Activated CD4-positive, alpha-beta memory T cell treated with anti-CD3 and anti-CD28 coated beads for 36 hours (primary cell): ENCODE measurements at regions of chr6 and their contacts with region 1.

Region 1: GRCh38 chr6:43228951-43229802 is at the start of gene DNPH1:
- DNase-seq: peak; percentile 86
- H3K4me3 Mint-ChIP-seq: peak within 1 kb of the TSS; percentile 89
- H3K27ac Mint-ChIP-seq: peak within 1 kb of the TSS; percentile 82
- H3K4me1 Mint-ChIP-seq: peaks cover 42% of the 10 kb centered on the region
- H3K27me3 Mint-ChIP-seq: no peaks in the 10 kb centered on the region
- total RNA-seq, gene DNPH1: 57.5 to 57.9 TPM

Region 2: DNA sequence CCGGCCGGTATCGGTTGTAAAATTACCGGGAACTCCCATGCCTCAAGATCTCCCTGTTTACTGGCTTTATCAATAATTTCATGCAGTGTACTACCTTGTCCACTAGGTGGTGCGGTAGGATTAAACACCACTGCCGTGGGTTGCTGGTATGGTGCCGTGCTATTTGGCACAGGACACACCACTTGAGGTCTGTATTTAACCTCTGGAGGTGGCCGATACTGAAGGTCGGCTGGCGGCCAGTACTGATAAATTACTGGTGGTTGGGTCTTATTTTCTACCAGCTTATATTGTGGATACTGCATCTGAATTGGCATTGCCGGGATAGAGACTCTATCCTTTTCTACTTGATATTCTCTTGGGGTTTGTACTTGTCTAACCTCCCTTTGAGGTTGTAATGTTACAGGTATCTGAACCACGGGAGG is 327.6 kb before region 1 on chr6:
- CTCF ChIA-PET with region 1: interaction called, 3 read pairs
- POLR2A ChIA-PET with region 1: no interaction called
- intact Hi-C with region 1: loop called (anchors 2 kb)
- DNase-seq: peak; percentile 78
- H3K4me3 Mint-ChIP-seq: no peak overlapping the region
- H3K27ac Mint-ChIP-seq: no peak overlapping the region
- H3K4me1 Mint-ChIP-seq: peaks cover 8% of the 10 kb centered on the region
- H3K27me3 Mint-ChIP-seq: no peaks in the 10 kb centered on the region

Region 3: DNA sequence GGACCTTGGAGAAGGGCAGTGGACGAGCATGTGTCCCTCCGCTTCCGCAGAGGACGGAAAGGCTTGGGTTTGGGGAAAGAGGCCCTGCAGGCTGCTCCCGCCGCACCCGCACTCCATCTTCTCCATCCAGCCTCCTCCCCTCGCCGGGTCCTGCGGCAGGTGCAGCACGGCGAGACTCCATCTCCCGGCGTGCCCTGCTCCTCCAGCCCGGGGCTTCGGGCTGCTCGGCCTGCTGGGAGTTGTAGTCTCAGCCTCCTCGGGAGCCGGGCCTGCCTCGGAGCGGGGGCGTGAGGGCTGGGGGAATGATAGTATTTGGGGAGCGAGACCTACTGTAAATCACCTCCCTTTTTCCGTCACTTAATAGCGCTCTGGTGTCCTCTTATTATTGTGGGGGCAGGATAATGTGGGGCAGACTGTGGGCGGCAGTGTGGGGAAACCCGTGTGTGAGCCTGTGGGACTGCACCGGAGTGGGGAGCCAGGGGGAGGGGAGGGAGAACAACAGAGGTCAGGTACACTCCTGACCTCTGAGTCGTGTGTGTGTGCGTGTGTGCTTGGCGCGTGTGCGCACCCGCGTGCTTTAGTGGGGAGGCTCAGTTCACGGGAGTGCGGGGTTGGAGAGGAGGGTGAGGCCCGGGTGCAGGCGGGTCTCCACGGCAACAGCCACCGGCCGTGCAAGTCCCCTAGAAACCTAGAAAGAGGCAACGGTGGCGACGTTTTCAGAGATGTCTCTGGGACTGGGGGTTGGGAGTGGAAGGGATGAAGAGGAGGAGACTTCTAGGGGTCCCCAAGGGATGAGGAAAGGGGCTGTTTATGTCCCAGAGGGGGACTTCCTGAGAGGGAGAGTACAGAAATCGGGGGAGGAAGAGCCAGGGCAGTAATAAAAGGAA is 18.2 kb after region 1 on chr6:
- CTCF ChIA-PET with region 1: interaction called, 14 read pairs
- POLR2A ChIA-PET with region 1: interaction called, 9 read pairs
- intact Hi-C with region 1: loop called (anchors 2 kb)
- DNase-seq: peak; percentile 90
- H3K4me3 Mint-ChIP-seq: peak overlapping the region; percentile 79
- H3K27ac Mint-ChIP-seq: peak overlapping the region; percentile 80
- H3K4me1 Mint-ChIP-seq: peaks cover 18% of the 10 kb centered on the region
- H3K27me3 Mint-ChIP-seq: peaks cover 8% of the 10 kb centered on the region

Region 4: DNA sequence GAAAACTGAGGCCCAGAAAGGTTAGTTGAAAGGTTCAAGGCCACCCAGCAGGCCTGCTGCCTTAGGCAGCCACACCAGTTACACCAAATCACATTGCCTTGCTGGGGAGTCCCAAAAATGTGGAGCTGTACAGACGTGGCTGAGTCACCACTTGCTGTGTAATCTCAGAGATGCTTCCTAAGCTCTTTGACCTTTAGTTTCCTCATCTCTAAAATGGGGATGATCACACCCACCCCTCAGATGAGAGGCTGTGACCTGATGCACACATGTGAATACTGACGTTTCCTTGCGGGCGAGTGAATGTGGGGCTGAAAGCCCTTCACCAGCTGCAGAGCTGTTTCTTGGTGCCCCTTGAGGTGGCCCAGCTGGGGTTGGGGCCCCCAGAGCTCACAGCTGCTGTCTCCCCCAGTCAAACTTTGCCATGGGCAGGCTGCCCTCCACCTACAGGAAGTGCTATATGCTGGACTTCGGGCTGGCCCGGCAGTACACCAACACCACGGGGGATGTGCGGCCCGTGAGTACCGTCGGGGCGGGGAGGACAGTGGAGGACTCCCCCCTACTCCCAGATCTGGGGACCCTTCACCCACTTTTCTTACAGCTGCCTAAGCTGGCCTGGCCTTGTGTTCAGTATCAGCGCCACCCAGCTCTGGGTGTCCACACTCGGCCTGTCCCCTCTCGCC is 25.1 kb after region 1 on chr6:
- CTCF ChIA-PET with region 1: interaction called, 11 read pairs
- POLR2A ChIA-PET with region 1: interaction called, 3 read pairs
- intact Hi-C with region 1: no loop called
- DNase-seq: peak; percentile 52
- H3K4me3 Mint-ChIP-seq: no peak overlapping the region
- H3K27ac Mint-ChIP-seq: no peak overlapping the region
- H3K4me1 Mint-ChIP-seq: peaks cover 17% of the 10 kb centered on the region
- H3K27me3 Mint-ChIP-seq: peaks cover 15% of the 10 kb centered on the region

Region 5: DNA sequence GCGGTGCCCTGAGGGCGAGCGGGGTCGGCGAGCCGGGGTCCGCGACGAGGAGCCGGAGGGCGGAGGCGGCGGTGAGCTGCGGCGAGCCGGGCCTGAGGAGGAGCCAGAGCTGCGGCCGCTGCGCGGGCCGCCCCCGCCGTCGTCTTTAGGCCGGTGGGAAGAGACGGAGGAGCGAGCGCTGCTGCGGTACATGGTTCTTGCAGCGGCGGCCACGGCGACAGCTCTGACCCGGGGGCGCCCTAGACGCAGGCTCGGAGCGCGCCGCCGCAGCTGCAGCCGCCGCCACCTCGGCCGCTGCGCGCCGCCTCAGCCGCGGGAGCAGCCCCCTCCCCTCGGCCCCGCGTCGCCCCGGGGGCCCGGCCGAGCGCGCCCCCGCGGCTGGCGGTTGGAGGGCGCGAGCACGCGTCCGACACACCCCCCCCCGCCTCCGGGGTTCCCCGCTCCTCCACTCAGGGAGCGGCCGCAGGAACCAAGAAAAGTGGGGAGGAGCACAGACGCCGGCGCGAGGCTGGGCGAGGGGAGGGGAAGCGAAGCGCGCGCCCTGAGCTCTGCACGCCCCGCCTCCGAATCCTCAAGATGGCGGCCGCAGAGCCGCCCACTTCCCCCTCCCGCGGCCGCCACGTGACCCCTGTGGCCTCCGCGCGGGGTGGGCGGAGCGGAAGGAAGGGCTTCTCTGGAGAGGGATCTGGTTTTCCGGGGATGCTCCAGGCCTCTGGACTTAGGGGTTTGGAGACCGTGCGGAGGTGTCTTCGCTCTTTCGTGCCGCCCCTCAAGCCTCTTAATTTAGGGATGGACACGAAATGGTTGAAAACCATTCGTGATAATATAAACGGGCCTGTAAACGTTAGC is 140.2 kb after region 1 on chr6 and contains the start of gene ZNF318:
- CTCF ChIA-PET with region 1: interaction called, 4 read pairs
- POLR2A ChIA-PET with region 1: interaction called, 9 read pairs
- intact Hi-C with region 1: loop called (anchors 2 kb)
- DNase-seq: peak; percentile 96
- H3K4me3 Mint-ChIP-seq: peak within 1 kb of the TSS; percentile 85
- H3K27ac Mint-ChIP-seq: peak within 1 kb of the TSS; percentile 91
- H3K4me1 Mint-ChIP-seq: peaks cover 30% of the 10 kb centered on the region
- H3K27me3 Mint-ChIP-seq: no peaks in the 10 kb centered on the region
- total RNA-seq, gene ZNF318: 12.1 to 12.7 TPM

Region 6: DNA sequence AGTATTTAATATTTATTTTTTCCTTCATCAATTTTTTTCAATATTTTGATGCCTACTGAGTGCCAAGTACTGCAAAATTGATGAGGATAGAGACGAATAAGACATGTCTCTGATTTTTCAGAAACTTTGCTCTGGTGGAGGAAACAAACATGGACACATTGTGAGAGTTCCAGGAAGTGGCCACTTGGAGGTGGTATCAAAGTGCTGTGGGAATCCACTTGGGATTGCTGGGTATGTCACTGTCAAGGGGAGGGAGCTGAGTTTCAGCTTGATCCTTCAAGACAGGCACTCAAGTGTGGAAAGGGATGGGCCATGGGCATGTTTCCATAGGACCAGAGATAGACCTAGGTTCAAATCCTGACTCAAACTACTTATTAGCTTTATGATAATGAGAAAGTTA is 173.6 kb after region 1 on chr6:
- CTCF ChIA-PET with region 1: interaction called, 13 read pairs
- POLR2A ChIA-PET with region 1: no interaction called
- intact Hi-C with region 1: no loop called
- DNase-seq: no peak
- H3K4me3 Mint-ChIP-seq: no peak overlapping the region
- H3K27ac Mint-ChIP-seq: no peak overlapping the region
- H3K4me1 Mint-ChIP-seq: peaks cover 1% of the 10 kb centered on the region
- H3K27me3 Mint-ChIP-seq: no peaks in the 10 kb centered on the region

Region 7: DNA sequence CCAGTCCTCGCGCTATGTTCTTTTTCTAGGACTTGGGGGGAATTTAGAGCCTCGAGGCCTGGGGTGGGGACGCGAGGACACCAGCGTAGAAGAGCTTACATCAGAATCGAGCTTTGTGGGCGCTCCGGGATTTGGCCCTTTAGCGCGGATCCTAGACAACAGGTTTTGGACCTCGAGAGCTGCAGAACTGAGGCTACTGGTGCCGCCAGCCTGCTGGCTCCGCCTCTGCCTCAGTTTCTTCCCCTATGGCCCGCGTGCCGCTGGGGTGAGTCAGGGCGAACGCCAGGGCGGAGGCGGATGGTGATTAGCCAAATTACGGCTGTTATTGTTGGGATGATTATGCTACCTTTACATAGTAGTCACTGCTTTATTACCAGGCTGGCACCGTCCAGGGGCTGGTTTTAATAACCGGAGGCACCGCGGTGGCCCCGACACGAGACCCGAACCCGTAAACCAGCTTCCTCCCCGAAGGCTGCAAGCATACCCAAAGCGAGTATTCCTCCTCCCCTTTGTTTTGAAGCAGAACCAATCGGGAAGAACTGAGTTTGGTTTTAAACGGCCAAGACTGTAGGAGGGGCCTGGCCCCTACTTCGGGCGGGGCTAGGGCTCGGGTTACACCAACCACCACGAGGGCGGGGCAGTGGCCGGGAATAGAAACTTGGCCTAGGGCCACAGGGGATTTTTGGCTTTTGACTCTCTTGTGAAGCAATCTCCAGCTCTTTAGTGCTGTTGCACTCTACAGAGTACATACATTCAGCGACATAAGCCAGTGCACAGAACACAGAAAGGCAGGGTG is 400.5 kb after region 1 on chr6:
- CTCF ChIA-PET with region 1: no interaction called
- POLR2A ChIA-PET with region 1: no interaction called
- intact Hi-C with region 1: loop called (anchors 10 kb)
- DNase-seq: peak; percentile 97
- H3K4me3 Mint-ChIP-seq: peak overlapping the region; percentile 93
- H3K27ac Mint-ChIP-seq: peak overlapping the region; percentile 98
- H3K4me1 Mint-ChIP-seq: peaks cover 29% of the 10 kb centered on the region
- H3K27me3 Mint-ChIP-seq: no peaks in the 10 kb centered on the region